ENCODE measurements at regions of chr13 and their contacts with region 1.

Region 1: DNA sequence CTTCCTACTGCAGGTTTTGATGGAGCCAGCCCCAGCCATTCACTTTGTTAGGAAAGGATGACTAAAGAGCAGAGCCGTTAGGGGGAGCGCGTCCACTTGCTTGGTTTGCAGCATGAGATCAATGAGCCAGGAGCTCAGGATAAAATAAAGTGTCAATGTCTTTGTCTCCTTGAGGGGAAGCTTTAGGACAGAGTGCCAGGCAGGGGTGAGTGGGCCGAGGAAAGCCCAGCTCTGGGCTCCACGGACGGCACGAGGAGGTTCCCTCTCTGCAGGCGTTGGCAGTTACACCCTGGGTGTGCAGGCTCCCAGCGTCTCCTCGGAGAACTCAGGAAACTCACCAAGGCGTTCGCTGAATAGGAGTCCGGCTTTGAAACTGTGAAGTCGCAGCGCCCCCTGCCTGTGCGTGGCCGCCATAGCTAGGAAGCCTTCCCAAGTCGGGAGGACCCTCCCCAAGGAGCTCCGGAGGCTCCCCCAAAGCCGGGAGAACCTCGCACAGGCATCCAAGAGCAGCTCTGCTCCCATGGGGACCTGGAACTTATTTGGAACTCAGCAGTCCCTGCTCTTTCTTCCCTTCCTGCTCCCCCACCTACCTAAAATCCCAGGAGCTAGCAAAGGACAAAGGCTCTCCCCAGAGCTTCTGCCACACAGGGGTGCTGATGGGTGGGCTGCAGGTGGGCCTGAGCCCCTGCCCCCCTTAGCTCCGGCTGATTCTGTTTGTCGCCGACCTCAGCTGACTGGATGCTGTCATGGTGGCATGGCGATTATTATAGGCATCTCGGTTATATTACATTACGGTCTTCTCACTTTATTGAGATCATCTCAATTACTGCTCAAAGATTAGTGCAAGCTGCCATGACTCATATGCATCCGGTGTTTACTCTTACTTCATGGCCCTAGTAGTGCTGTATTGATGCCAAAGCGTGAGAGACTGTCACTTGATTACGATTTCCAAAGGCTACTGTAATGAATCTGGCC is 34.4 kb downstream of the GSX1 start:
- DNase-seq: peak; percentile 75
- H3K4me3 ChIP-seq: peak overlapping the region in 2 of 3 experiments; percentile 32 to 42
- H3K27ac ChIP-seq: no peak overlapping the region
- H3K4me1 ChIP-seq: peaks cover 11% of the 10 kb centered on the region
- H3K27me3 ChIP-seq: peaks cover 10% of the 10 kb centered on the region
- CTCF ChIP-seq: peak; percentile 72 to 91

Region 2: DNA sequence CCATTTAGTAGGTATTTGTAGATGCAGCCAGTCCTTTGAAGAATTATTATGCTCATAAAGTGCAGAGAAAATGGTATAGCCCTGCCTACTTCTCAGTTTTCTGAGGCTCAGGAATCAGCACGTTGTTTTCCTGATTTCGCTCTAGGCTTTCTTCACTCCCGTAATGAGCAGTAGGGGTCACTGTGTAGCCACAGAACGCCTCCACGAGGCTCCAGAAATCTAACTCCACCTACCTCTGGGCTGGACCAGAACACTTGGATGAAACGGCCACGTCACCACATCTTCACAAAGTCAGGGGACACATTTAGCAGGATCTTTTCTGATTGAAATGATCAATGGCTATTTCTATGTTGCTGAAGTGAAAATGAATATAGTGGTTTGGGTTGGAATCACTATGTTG is 452.0 kb before region 1 on chr13:
- CTCF ChIA-PET with region 1: interaction called, 4 read pairs
- dilution Hi-C with region 1: no loop called
- in situ Hi-C with region 1: loop called (anchors 10 kb)
- intact Hi-C with region 1: loop called (anchors 1 kb)
- DNase-seq: peak; percentile 72
- H3K4me3 ChIP-seq: no peak overlapping the region
- H3K27ac ChIP-seq: no peak overlapping the region
- H3K4me1 ChIP-seq: no peaks in the 10 kb centered on the region
- H3K27me3 ChIP-seq: peaks cover 2% of the 10 kb centered on the region
- CTCF ChIP-seq: peak; percentile 62 to 83

Region 3: GRCh38 chr13:27524981-27525975 is 301.4 kb before region 1 on chr13:
- CTCF ChIA-PET with region 1: no interaction called
- dilution Hi-C with region 1: no loop called
- in situ Hi-C with region 1: loop called (anchors 5 to 10 kb)
- intact Hi-C with region 1: no loop called
- DNase-seq: no peak
- H3K4me3 ChIP-seq: no peak overlapping the region
- H3K27ac ChIP-seq: no peak overlapping the region
- H3K4me1 ChIP-seq: no peaks in the 10 kb centered on the region
- H3K27me3 ChIP-seq: no peaks in the 10 kb centered on the region
- CTCF ChIP-seq: no peak

Region 4: DNA sequence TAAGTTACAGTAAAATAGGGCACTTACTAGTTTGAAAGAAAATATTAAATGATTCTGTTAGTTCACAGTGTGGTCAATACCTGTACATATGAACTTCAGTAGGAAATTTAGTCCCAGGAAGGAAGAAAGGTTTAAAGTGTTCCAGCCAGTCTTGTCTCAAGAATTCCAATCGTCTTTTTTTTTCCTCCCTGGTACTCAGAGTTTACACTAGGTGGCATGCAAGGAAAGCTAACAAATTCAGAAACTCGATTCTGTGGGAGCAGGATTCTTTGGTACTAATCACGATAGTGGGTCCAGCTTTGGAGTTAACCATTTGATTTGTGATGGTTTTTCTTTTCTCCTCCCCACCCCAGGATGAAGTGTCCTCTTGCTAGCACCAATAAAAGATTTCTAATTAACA is 161.3 kb before region 1 on chr13:
- CTCF ChIA-PET with region 1: interaction called, 5 read pairs
- dilution Hi-C with region 1: no loop called
- in situ Hi-C with region 1: loop called in 1 of 2 experiments (anchors 25 kb)
- intact Hi-C with region 1: loop called (anchors 1 kb)
- DNase-seq: no peak
- H3K4me3 ChIP-seq: no peak overlapping the region
- H3K27ac ChIP-seq: no peak overlapping the region
- H3K4me1 ChIP-seq: peaks cover 12% of the 10 kb centered on the region
- H3K27me3 ChIP-seq: no peaks in the 10 kb centered on the region
- CTCF ChIP-seq: peak; percentile 30 to 65

Region 5: GRCh38 chr13:27792393-27793218 is 34.1 kb before region 1 on chr13 and contains the start of gene GSX1:
- CTCF ChIA-PET with region 1: interaction called, 3 read pairs
- dilution Hi-C with region 1: no loop called
- in situ Hi-C with region 1: no loop called
- intact Hi-C with region 1: loop called (anchors 2 kb)
- DNase-seq: peak; percentile 79
- H3K4me3 ChIP-seq: peak within 1 kb of the TSS in 1 of 3 experiments; percentile 31
- H3K27ac ChIP-seq: no peak within 1 kb of the TSS
- H3K4me1 ChIP-seq: peaks cover 7% of the 10 kb centered on the region
- H3K27me3 ChIP-seq: peaks cover 74% of the 10 kb centered on the region
- CTCF ChIP-seq: no peak
- total RNA-seq, gene GSX1: not detected

Region 6: DNA sequence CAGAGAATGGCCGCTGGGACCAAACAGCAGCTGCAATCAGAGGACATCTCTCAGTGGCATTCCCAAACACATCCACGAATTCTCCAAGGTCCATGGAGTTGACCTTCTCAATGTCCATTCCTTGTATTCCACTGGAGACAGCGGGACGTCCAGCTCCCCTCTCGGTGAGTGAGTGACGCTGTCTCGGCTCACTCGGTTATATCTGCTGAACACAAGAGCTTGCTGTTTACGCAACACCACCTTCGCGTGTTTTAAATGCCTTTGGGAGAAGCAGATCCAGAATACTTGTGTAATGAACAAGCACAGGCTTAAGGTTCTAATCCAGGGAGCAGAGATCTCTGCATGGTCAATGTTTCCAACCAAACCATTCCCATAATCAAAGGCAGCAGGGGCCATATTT is 161.9 kb after region 1 on chr13 and contains the start of gene URAD:
- CTCF ChIA-PET with region 1: interaction called, 8 read pairs
- dilution Hi-C with region 1: no loop called
- in situ Hi-C with region 1: loop called (anchors 5 to 25 kb)
- intact Hi-C with region 1: loop called (anchors 1 kb)
- DNase-seq: no peak
- H3K4me3 ChIP-seq: no peak within 1 kb of the TSS
- H3K27ac ChIP-seq: no peak within 1 kb of the TSS
- H3K4me1 ChIP-seq: peaks cover 8% of the 10 kb centered on the region
- H3K27me3 ChIP-seq: peaks cover 4% of the 10 kb centered on the region
- CTCF ChIP-seq: no peak
- total RNA-seq, gene URAD: not detected

Measured in mammary epithelial cell (primary cell).